ENCODE measurements at regions of chr9 and their contacts with region 1.

Region 1: GRCh38 chr9:34458013-34458958 is at the starts of genes DNAI1 and FAM219A:
- DNase-seq: peak; percentile 95 to 99
- H3K4me3 ChIP-seq: peak within 1 kb of the TSS; percentile 64 to 87 (median 84)
- H3K27ac ChIP-seq: no peak within 1 kb of the TSS
- H3K4me1 ChIP-seq: peaks cover 0 to 12% (median 6%) of the 10 kb centered on the region in 4 experiments; a peak in 6 of 7 replicates
- H3K27me3 ChIP-seq: peaks cover 0 to 12% (median 7%) of the 10 kb centered on the region in 4 experiments; a peak in 4 of 7 replicates
- CTCF ChIP-seq: no peak
- EP300 ChIP-seq: no peak
- POLR2A ChIP-seq: peak in 1 of 2 experiments; percentile 67; a peak in 1 of 3 replicates
- RAD21 ChIP-seq: no peak
- total RNA-seq, gene DNAI1: 0.37 and 1.1 TPM in 2 replicates
- total RNA-seq, gene FAM219A: 10.4 and 10.6 TPM in 2 replicates

Region 2: DNA sequence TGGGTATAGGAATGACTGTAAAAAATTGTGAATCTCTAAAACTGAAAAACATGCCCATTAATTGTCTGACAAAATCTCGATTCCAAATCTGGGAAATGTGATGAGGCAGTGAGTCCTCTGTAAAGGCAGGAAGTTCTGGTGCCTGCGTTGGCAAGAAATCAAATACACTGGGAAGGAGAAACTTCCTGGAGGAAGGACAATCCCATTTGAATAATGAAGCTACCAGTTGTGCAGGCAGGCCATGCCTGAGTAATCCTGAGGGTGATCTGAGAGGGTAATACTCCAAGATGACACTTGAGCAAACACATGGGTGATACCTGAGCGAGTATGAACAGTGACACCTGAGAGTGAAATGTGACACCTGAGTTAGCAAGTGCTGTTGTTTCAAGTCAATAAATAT is 178.9 kb before region 1 on chr9:
- CTCF ChIA-PET with region 1: no interaction called
- POLR2A ChIA-PET with region 1: no interaction called
- DNase-seq: no peak
- H3K4me3 ChIP-seq: no peak overlapping the region
- H3K27ac ChIP-seq: no peak overlapping the region
- H3K4me1 ChIP-seq: no peaks in the 10 kb centered on the region
- H3K27me3 ChIP-seq: no peaks in the 10 kb centered on the region
- CTCF ChIP-seq: no peak
- EP300 ChIP-seq: no peak
- POLR2A ChIP-seq: no peak
- RAD21 ChIP-seq: no peak

Region 3: DNA sequence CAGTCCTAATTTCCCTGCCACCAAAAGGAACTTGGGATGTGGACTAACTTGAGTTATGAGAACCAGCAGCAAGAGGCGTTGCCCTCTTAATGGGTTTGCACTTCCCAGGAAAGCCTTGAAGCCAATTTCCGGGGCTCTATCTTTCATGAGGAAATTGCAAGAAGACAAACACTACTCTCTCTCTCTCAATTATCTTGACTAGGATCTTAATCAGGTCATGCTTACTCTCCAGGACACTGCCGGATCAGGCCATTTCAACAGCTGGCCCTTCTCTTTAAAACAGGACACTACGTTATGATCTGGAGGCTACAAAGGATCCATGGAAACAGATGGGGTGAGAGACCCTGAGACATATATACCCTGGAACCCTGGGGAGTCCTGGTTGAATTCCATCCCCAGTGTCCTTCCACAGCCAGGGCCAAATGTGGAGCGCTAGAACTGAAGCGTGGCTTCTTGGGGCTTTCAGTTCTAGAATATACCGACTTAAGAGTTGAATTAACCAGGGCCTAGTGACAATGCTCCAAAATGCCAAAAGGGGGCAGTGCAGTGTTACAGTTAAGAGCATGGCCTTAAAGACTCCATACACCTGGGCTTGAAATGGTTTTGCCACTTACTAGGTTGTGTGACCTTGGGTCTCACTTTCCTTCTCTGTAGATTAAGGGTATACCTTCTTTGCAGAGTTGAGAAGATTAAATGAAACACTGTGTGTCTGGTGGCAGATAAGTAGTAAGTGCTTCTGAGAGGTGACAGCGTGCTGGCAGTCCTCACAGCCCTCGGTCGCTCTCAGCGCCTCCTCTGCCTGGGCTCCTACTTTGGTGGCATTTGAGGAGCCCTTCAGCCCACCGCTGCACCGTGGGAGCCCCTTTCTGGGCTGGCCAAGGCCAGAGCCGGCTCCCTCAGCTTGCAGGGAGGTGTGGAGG is 21.0 kb before region 1 on chr9:
- CTCF ChIA-PET with region 1: interaction called, 18 read pairs
- POLR2A ChIA-PET with region 1: no interaction called
- DNase-seq: peak; percentile 47 to 73
- H3K4me3 ChIP-seq: no peak overlapping the region
- H3K27ac ChIP-seq: no peak overlapping the region
- H3K4me1 ChIP-seq: no peaks in the 10 kb centered on the region
- H3K27me3 ChIP-seq: no peaks in the 10 kb centered on the region
- CTCF ChIP-seq: peak in 2 of 3 experiments; percentile 91 to 94; a peak in 3 of 4 replicates
- EP300 ChIP-seq: no peak
- POLR2A ChIP-seq: no peak
- RAD21 ChIP-seq: peak; percentile 95 to 99

Region 4: GRCh38 chr9:34446468-34446891 is 11.8 kb before region 1 on chr9:
- CTCF ChIA-PET with region 1: interaction called, 13 read pairs
- POLR2A ChIA-PET with region 1: interaction called, 6 read pairs
- DNase-seq: no peak
- H3K4me3 ChIP-seq: no peak overlapping the region
- H3K27ac ChIP-seq: no peak overlapping the region
- H3K4me1 ChIP-seq: peaks cover 2 to 6% (median 5%) of the 10 kb centered on the region in 4 experiments; a peak in 4 of 7 replicates
- H3K27me3 ChIP-seq: no peaks in the 10 kb centered on the region
- CTCF ChIP-seq: no peak
- EP300 ChIP-seq: no peak
- POLR2A ChIP-seq: no peak
- RAD21 ChIP-seq: no peak